IMR-90 (cell line): ENCODE measurements at regions of chr10 and their contacts with region 1.

Region 1: GRCh38 chr10:103572347-103573204 is 79.1 kb downstream of the NEURL1 start:
- DNase-seq: peak; percentile 11
- ATAC-seq: peak; percentile 32; the same call in 1 of the 2 replicates
- H3K4me3 ChIP-seq: no peak overlapping the region
- H3K27ac ChIP-seq: no peak overlapping the region
- H3K4me1 ChIP-seq: peaks cover 5% of the 10 kb centered on the region; the same call in 1 of the 2 replicates
- H3K27me3 ChIP-seq: peaks cover 82% of the 10 kb centered on the region
- CTCF ChIP-seq: no peak
- POLR2A ChIP-seq: no peak
- RAD21 ChIP-seq: no peak

Region 2: DNA sequence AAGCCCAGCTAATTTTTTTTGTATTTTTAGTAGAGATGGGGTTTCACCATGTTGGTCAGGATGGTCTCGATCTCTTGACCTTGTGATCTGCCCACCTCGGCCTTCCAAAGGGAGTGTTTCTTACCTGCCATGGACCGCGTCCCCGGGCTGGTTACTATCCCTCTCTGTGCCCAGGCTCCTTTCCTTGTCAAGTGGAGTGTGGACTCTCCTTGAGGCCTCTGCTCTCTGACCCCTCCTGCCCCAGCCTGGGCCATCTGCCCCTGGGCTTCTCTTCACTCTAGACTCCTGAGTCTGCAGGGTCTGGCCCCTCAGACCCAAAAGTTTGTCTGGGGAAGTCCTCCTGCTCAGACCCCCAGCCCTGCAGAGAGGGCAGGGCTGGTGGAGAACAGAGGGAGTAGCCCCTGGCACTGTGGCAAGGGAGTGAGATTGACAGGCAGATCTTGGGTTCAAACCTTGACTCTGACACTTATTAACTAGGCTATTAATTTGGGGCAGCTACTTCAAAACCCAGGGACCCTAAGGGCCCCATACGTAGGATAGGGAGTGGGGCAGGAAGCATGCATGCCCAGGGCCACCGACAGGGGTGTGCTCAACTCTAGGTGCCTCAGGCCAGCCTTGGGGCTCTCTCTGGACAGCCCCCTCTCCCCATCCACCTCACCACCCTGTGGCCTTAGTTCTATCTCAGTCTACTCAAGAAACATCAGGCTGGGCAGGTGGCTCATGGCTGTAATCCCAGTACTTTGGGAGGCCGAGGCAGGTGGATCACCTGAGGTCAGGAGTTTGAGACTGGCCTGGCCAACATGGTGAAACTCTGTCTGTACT is 58.1 kb before region 1 on chr10:
- CTCF ChIA-PET with region 1: no interaction called
- POLR2A ChIA-PET with region 1: interaction called, 12 read pairs
- dilution Hi-C with region 1: no loop called
- in situ Hi-C with region 1: no loop called
- intact Hi-C with region 1: no loop called
- DNase-seq: no peak
- ATAC-seq: no peak
- H3K4me3 ChIP-seq: no peak overlapping the region
- H3K27ac ChIP-seq: no peak overlapping the region
- H3K4me1 ChIP-seq: peaks cover 4% of the 10 kb centered on the region; the same call in 1 of the 2 replicates
- H3K27me3 ChIP-seq: peaks cover 56% of the 10 kb centered on the region
- CTCF ChIP-seq: no peak
- POLR2A ChIP-seq: no peak
- RAD21 ChIP-seq: no peak